ENCODE measurements at regions of chr6 and their contacts with region 1.

Region 1: GRCh38 chr6:86738078-86738477 is 199.2 kb upstream of the HTR1E start:
- DNase-seq: no peak
- H3K4me3 ChIP-seq: no peak overlapping the region
- CTCF ChIP-seq: no peak
- POLR2A ChIP-seq: no peak

Region 2: DNA sequence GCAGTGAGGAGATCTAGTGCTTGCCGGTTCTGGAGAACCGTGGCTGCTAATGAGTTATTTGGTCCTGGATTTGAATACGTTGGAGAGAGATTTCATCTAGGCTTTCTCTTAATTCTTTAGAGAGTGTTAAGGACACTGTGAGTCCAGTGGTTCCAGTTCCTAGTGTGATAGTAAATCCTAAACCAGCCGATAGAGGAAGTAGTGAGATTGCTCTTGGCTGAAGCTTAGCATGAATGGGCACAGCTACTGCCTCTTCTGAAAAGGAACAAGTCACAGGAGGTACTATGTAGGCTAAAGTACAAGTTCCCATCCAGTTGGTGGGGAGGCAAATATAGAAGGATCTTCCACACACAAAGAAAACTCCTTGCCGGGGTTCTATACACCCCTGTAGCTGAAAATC is 764.8 kb before region 1 on chr6:
- intact Hi-C with region 1: loop called (anchors 2 kb)
- DNase-seq: no peak
- H3K4me3 ChIP-seq: no peak overlapping the region
- CTCF ChIP-seq: no peak
- POLR2A ChIP-seq: no peak

Region 3: GRCh38 chr6:86756623-86757229 is 18.6 kb after region 1 on chr6:
- intact Hi-C with region 1: no loop called
- DNase-seq: no peak
- H3K4me3 ChIP-seq: no peak overlapping the region
- CTCF ChIP-seq: no peak
- POLR2A ChIP-seq: no peak